CD4-positive, alpha-beta memory T cell (primary cell): ENCODE measurements at regions of chr2 and their contacts with region 1.

Region 1: GRCh38 chr2:70086838-70087701 is at the start of gene PCBP1:
- DNase-seq: peak; percentile 93 to 99 (median 97)
- H3K4me3 ChIP-seq: peak within 1 kb of the TSS; percentile 74 to 84
- H3K4me3 Mint-ChIP-seq: peak within 1 kb of the TSS; percentile 93 to 99 (median 96)
- H3K27ac ChIP-seq: peak within 1 kb of the TSS; percentile 99
- H3K27ac Mint-ChIP-seq: peak within 1 kb of the TSS; percentile 99 to 100 (median 100)
- H3K4me1 ChIP-seq: peaks cover 68% of the 10 kb centered on the region
- H3K4me1 Mint-ChIP-seq: peaks cover 47 to 93% (median 59%) of the 10 kb centered on the region in 4 donors
- H3K27me3 ChIP-seq: no peaks in the 10 kb centered on the region
- H3K27me3 Mint-ChIP-seq: peaks cover 3% of the 10 kb centered on the region in 2 donors
- total RNA-seq, gene PCBP1: 372 to 383 TPM

Region 2: DNA sequence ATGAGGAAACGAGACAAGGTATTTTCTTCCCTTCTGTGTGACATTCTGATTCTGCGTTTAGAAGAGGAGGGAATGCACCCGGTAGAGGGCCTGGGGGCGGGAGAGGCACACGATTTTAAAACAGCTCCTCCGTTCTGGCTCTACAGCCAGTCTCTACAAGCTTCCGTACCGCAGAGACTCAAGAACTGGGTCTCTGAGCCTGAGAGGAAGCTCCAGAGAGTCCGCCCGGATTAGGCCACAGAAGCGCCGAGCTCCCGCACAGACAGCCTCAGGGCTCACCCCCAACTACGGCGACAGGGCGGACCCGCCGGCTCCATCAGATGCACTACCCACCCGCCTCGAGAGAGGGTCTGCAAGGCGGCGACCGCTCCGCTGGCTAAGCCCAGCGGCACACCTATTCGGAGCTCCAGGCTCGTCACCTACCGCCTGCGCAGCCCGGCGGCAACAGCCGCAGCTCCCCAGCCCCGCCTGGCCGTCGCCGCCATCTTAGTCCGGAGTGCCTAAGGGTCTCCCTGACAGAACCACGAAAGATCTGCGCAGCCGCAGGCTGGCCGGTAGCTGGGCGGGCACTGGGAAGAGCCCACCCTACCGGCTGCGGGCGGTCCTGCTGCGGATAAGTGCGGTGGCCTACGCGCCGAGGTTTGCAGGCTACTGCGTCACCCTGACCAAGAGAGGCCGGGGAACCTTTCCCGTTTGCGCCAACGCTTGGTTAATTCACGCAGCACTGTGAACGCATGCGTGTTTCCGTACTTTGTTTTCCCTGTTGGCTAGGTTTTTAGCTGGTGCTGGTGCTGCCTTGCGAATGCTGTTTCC is 649.9 kb before region 1 on chr2 and contains the start of gene NFU1:
- CTCF ChIA-PET with region 1: no interaction called
- POLR2A ChIA-PET with region 1: interaction called, 15 read pairs
- intact Hi-C with region 1: no loop called
- DNase-seq: peak; percentile 85 to 91 (median 89)
- H3K4me3 ChIP-seq: peak within 1 kb of the TSS; percentile 75 to 82
- H3K4me3 Mint-ChIP-seq: peak within 1 kb of the TSS; percentile 93 to 99 (median 98)
- H3K27ac ChIP-seq: peak within 1 kb of the TSS; percentile 91
- H3K27ac Mint-ChIP-seq: peak within 1 kb of the TSS; percentile 98 to 100 (median 99)
- H3K4me1 ChIP-seq: peaks cover 32% of the 10 kb centered on the region
- H3K4me1 Mint-ChIP-seq: peaks cover 26 to 48% (median 34%) of the 10 kb centered on the region in 4 donors
- H3K27me3 ChIP-seq: no peaks in the 10 kb centered on the region
- H3K27me3 Mint-ChIP-seq: no peaks in the 10 kb centered on the region
- total RNA-seq, gene NFU1: 23.9 to 27.0 TPM

Region 3: GRCh38 chr2:69946351-69947077 is 140.6 kb before region 1 on chr2:
- CTCF ChIA-PET with region 1: interaction called, 5 read pairs
- POLR2A ChIA-PET with region 1: interaction called, 32 read pairs
- intact Hi-C with region 1: no loop called
- DNase-seq: peak; percentile 50 to 79 (median 64)
- H3K4me3 ChIP-seq: peak overlapping the region in 1 of 2 donors; percentile 21
- H3K4me3 Mint-ChIP-seq: peak overlapping the region in 7 of 8 donors; percentile 47 to 82 (median 64)
- H3K27ac ChIP-seq: peak overlapping the region; percentile 39
- H3K27ac Mint-ChIP-seq: peak overlapping the region; percentile 87 to 96 (median 90)
- H3K4me1 ChIP-seq: peaks cover 26% of the 10 kb centered on the region
- H3K4me1 Mint-ChIP-seq: peaks cover 24 to 36% (median 31%) of the 10 kb centered on the region in 4 donors
- H3K27me3 ChIP-seq: no peaks in the 10 kb centered on the region
- H3K27me3 Mint-ChIP-seq: no peaks in the 10 kb centered on the region

Region 4: GRCh38 chr2:70115646-70116442 is 28.8 kb after region 1 on chr2:
- CTCF ChIA-PET with region 1: no interaction called
- POLR2A ChIA-PET with region 1: interaction called, 2,231 read pairs
- intact Hi-C with region 1: no loop called
- DNase-seq: no peak
- H3K4me3 ChIP-seq: no peak overlapping the region
- H3K4me3 Mint-ChIP-seq: no peak overlapping the region
- H3K27ac ChIP-seq: no peak overlapping the region
- H3K27ac Mint-ChIP-seq: peak overlapping the region in 1 of 7 donors; percentile 4
- H3K4me1 ChIP-seq: peaks cover 40% of the 10 kb centered on the region
- H3K4me1 Mint-ChIP-seq: peaks cover 21 to 37% (median 28%) of the 10 kb centered on the region in 4 donors
- H3K27me3 ChIP-seq: no peaks in the 10 kb centered on the region
- H3K27me3 Mint-ChIP-seq: no peaks in the 10 kb centered on the region

Region 5: GRCh38 chr2:70137519-70137918 is 50.4 kb after region 1 on chr2:
- CTCF ChIA-PET with region 1: interaction called, 17 read pairs
- POLR2A ChIA-PET with region 1: interaction called, 2,231 read pairs
- intact Hi-C with region 1: loop called (anchors 1 kb)
- DNase-seq: peak in 1 of 5 donors; percentile 64
- H3K4me3 ChIP-seq: peak overlapping the region in 1 of 2 donors; percentile 14
- H3K4me3 Mint-ChIP-seq: peak overlapping the region; percentile 1 to 84 (median 66)
- H3K27ac ChIP-seq: peak overlapping the region; percentile 40
- H3K27ac Mint-ChIP-seq: peak overlapping the region; percentile 89 to 98 (median 92)
- H3K4me1 ChIP-seq: peaks cover 89% of the 10 kb centered on the region
- H3K4me1 Mint-ChIP-seq: peaks cover 59 to 91% (median 70%) of the 10 kb centered on the region in 4 donors
- H3K27me3 ChIP-seq: no peaks in the 10 kb centered on the region
- H3K27me3 Mint-ChIP-seq: no peaks in the 10 kb centered on the region

Region 6: GRCh38 chr2:70248181-70248847 is 161.2 kb after region 1 on chr2 and contains the start of gene TIA1:
- CTCF ChIA-PET with region 1: no interaction called
- POLR2A ChIA-PET with region 1: interaction called, 3 read pairs
- intact Hi-C with region 1: loop called (anchors 2 kb)
- DNase-seq: peak; percentile 95 to 99 (median 98)
- H3K4me3 ChIP-seq: peak within 1 kb of the TSS; percentile 39 to 89
- H3K4me3 Mint-ChIP-seq: peak within 1 kb of the TSS; percentile 90 to 99 (median 96)
- H3K27ac ChIP-seq: peak within 1 kb of the TSS; percentile 95
- H3K27ac Mint-ChIP-seq: peak within 1 kb of the TSS; percentile 93 to 99 (median 99)
- H3K4me1 ChIP-seq: peaks cover 39% of the 10 kb centered on the region
- H3K4me1 Mint-ChIP-seq: peaks cover 26 to 54% (median 33%) of the 10 kb centered on the region in 4 donors
- H3K27me3 ChIP-seq: no peaks in the 10 kb centered on the region
- H3K27me3 Mint-ChIP-seq: peaks cover 2 to 4% of the 10 kb centered on the region in 2 donors
- total RNA-seq, gene TIA1: 200 to 208 TPM